Upper lobe of right lung (tissue), 1 donor: ENCODE measurements at regions of chr14 and their contacts with region 1.

Region 1: DNA sequence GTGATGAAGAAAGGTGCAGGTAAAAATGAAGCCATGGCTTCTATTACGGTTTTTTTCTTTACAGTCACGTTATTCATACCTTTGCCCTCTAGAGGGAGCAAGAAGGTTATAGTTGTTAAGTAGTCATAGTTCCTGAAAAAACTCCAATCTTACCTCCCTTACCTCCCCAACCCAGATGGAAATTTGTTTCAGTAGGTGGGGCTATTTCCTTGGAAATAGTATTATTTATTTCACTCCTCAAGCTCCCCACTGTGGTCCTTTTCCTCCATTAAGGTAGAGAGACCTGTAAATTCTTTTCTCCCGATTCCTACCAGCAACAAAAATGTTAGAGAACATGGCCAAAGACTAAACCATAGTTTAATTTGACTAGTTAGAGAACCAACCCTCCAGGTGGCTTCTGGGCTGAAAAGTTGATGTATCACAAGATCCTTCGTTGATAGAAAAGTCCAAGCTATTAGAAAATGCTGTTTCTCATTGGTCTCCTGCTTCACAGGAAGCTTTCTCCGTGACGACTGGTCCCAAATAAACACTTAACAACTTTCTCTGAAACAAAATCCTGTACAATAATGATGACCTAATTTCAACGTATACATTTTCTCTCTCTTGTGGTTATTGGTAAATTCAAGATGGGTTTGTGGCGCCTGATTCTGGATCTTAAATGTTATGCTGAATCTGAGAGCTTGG is 43.5 kb downstream of the TMX1 start:
- DNase-seq: no peak
- ATAC-seq: peak; percentile 85
- H3K4me3 ChIP-seq: no peak overlapping the region
- H3K27ac ChIP-seq: no peak overlapping the region
- H3K4me1 ChIP-seq: no peaks in the 10 kb centered on the region
- H3K27me3 ChIP-seq: no peaks in the 10 kb centered on the region
- CTCF ChIP-seq: peak; percentile 77

Region 2: GRCh38 chr14:51776102-51776894 is 492.8 kb after region 1 on chr14:
- intact Hi-C with region 1: loop called (anchors 5 kb)
- DNase-seq: no peak
- ATAC-seq: peak; percentile 64
- H3K4me3 ChIP-seq: no peak overlapping the region
- H3K27ac ChIP-seq: no peak overlapping the region
- H3K4me1 ChIP-seq: no peaks in the 10 kb centered on the region
- H3K27me3 ChIP-seq: no peaks in the 10 kb centered on the region
- CTCF ChIP-seq: peak; percentile 45